Activated CD8-positive, alpha-beta T cell treated with anti-CD3 and anti-CD28 coated beads for 36 hours (primary cell): ENCODE measurements at regions of chr1 and their contacts with region 1.

Region 1: DNA sequence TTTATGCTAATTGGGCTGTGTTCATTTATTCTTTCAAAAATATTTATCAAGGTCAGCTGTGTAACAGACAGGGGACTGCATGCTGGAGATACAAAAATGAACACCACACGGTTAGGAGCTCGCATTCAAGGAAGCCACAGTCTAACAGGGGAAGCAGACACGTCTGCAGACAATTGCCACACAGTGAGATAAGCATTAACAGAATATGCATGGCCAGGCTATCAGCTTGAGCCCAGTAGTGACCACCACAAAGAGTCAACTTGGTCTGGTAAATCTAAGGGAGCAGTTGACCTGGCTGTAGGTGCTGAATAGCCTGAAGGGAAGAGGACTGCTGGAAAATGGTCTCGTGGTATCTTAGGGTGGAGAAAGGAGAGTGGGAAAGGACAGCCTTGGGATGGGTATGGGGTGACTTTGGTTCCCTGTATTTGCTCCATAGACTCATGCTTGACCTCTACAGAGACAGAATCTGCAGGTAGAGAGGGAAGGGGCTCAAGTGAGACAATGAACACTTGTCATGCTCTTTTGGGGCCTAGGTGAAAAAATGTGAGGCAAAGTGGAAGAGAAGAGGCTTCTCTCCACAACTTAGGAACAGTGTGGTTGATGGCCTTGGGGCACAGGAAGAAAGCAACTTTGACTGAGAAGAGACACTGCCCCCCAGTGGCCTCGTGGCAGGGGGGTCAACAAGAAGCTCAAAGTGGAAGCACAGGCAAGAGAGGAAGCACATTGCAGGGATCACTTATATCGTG is 7.6 kb upstream of the NPL start:
- DNase-seq: peak; percentile 86
- ATAC-seq: peak; percentile 72
- H3K4me3 Mint-ChIP-seq: no peak overlapping the region
- H3K27ac Mint-ChIP-seq: no peak overlapping the region
- H3K4me1 Mint-ChIP-seq: peaks cover 15% of the 10 kb centered on the region
- H3K27me3 Mint-ChIP-seq: peaks cover 9% of the 10 kb centered on the region
- CTCF ChIP-seq: peak; percentile 72

Region 2: DNA sequence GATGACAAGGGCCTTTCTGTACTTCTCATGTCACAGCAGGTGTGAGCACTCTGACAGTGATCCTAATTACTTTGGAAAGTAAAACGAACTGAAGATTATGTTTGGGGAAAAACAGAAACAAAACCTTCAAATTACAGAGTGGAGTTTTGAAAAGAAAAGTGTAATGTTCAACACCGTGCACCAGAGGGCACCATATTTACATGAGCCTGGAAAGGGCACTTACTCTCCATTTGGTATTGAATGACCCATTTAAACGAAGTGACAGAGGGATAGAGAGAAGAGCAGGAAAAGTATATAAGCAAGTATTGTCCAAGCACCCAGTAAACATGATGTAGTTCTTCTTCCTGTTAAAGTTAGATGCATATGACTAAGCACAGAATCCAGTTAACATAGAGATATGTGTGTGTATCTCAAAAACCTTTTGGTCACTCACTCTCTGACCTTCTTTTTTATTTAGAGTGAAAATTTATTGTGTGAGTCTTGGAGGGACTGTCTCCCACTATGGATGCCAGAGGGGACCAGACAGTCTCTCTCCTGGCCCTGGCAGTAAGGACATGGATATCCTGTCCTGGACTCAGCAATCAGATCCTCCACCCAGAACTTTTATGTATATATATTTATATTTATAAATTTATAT is 335.9 kb before region 1 on chr1:
- CTCF ChIA-PET with region 1: interaction called, 13 read pairs
- POLR2A ChIA-PET with region 1: no interaction called
- intact Hi-C with region 1: loop called (anchors 2 kb)
- DNase-seq: peak; percentile 52
- ATAC-seq: peak; percentile 81
- H3K4me3 Mint-ChIP-seq: no peak overlapping the region
- H3K27ac Mint-ChIP-seq: no peak overlapping the region
- H3K4me1 Mint-ChIP-seq: no peaks in the 10 kb centered on the region
- H3K27me3 Mint-ChIP-seq: no peaks in the 10 kb centered on the region
- CTCF ChIP-seq: peak; percentile 82

Region 3: DNA sequence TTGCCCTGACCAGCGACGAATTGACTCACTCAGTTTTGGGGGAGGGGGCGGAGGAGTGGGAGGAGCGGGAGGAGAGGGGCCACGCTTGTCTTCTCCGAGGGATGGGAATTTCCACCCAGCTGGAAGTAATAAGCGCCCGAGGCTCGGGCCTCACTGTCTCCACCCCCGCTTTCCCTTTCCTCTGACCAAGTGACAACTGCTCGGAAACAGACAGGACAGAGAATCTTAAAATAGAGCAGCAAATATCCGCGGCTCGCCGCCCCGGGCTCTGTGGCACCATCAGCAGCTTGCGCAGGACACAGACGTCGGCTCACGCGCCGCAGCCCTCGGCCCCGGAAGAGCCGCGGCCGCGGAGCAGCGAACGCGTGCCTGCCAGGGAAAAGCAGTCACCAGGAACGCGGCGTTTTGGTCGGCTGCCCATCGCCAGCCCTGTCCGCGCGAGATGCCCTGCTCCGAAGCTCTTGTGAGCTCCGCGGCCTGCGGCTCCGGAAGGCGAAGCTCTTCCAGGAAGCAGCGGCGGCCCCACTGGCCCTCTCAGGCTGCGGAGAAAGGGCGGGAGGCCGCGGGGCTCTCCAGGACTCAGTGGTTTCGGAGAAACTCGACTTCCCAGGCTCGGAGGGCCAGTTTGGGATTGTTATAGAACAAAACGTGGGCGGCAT is 167.1 kb before region 1 on chr1:
- CTCF ChIA-PET with region 1: interaction called, 18 read pairs
- POLR2A ChIA-PET with region 1: interaction called, 5 read pairs
- intact Hi-C with region 1: no loop called
- DNase-seq: peak; percentile 84
- ATAC-seq: peak; percentile 31
- H3K4me3 Mint-ChIP-seq: peak overlapping the region; percentile 77
- H3K27ac Mint-ChIP-seq: peak overlapping the region; percentile 89
- H3K4me1 Mint-ChIP-seq: peaks cover 57% of the 10 kb centered on the region
- H3K27me3 Mint-ChIP-seq: peaks cover 45% of the 10 kb centered on the region
- CTCF ChIP-seq: no peak

Region 4: DNA sequence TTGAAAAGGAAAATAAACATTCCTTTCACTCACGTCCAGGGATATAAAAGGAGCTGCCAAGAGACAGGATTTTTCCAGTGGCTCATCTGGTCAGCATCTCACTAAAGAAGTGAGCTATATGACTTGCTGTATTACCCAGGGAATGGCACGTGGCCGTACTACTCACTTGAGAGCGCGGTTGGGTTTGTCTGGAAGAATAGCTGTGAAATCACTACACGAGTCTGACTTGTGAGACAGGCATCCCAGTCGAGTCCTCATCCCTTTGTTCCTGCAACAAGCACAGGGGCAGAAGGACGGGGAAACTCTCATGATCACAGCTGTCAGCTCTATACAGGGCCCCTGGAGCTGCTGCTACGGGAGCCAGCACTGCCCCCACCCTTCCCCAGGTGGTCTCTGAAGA is 115.3 kb before region 1 on chr1:
- CTCF ChIA-PET with region 1: interaction called, 10 read pairs
- POLR2A ChIA-PET with region 1: no interaction called
- intact Hi-C with region 1: no loop called
- DNase-seq: no peak
- ATAC-seq: no peak
- H3K4me3 Mint-ChIP-seq: no peak overlapping the region
- H3K27ac Mint-ChIP-seq: no peak overlapping the region
- H3K4me1 Mint-ChIP-seq: no peaks in the 10 kb centered on the region
- H3K27me3 Mint-ChIP-seq: peaks cover 19% of the 10 kb centered on the region
- CTCF ChIP-seq: no peak

Region 5: GRCh38 chr1:182761396-182762395 is 20.3 kb before region 1 on chr1:
- CTCF ChIA-PET with region 1: interaction called, 47 read pairs
- POLR2A ChIA-PET with region 1: no interaction called
- intact Hi-C with region 1: no loop called
- DNase-seq: peak; percentile 41
- ATAC-seq: peak; percentile 61
- H3K4me3 Mint-ChIP-seq: no peak overlapping the region
- H3K27ac Mint-ChIP-seq: peak overlapping the region; percentile 73
- H3K4me1 Mint-ChIP-seq: peaks cover 8% of the 10 kb centered on the region
- H3K27me3 Mint-ChIP-seq: peaks cover 18% of the 10 kb centered on the region
- CTCF ChIP-seq: no peak

Region 6: DNA sequence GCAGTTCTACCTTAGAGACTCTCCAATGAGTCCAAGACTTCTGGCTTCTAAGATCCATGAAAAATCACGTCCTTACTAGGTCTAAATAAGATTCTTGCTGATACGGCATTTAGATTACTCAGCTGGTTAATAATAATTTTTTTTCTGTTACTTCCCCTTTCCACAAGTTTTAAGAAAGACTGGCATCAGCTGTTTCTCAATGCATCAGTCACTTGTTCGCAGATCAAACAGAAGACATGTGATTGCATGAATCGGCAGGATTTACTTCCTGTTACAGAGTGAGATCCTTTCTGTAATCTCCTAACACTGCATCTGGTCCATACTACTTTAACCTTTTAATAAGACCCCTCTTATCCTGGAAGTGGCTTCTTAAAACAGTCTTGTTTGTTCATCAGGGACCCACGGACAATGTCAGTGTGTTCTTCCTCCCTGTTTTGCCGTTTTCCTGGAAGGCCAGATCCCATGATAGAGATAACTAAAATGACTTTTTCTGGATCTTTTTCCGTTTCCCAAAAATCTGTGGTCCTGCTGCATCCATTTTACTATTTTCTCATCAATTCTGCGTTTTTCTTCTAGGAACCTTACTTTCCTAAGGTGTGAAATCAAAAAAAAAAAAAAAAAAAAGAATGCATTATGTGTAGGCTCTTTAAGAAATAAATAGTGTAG is 13.7 kb after region 1 on chr1:
- CTCF ChIA-PET with region 1: interaction called, 13 read pairs
- POLR2A ChIA-PET with region 1: no interaction called
- intact Hi-C with region 1: no loop called
- DNase-seq: no peak
- ATAC-seq: no peak
- H3K4me3 Mint-ChIP-seq: no peak overlapping the region
- H3K27ac Mint-ChIP-seq: no peak overlapping the region
- H3K4me1 Mint-ChIP-seq: peaks cover 7% of the 10 kb centered on the region
- H3K27me3 Mint-ChIP-seq: no peaks in the 10 kb centered on the region
- CTCF ChIP-seq: no peak

Region 7: GRCh38 chr1:182962554-182963115 is 180.6 kb after region 1 on chr1:
- CTCF ChIA-PET with region 1: no interaction called
- POLR2A ChIA-PET with region 1: no interaction called
- intact Hi-C with region 1: no loop called
- DNase-seq: peak; percentile 63
- ATAC-seq: peak; percentile 97
- H3K4me3 Mint-ChIP-seq: no peak overlapping the region
- H3K27ac Mint-ChIP-seq: no peak overlapping the region
- H3K4me1 Mint-ChIP-seq: no peaks in the 10 kb centered on the region
- H3K27me3 Mint-ChIP-seq: peaks cover 2% of the 10 kb centered on the region
- CTCF ChIP-seq: peak; percentile 74